H1 (cell line): ENCODE measurements at regions of chr6 and their contacts with region 1.

Region 1: DNA sequence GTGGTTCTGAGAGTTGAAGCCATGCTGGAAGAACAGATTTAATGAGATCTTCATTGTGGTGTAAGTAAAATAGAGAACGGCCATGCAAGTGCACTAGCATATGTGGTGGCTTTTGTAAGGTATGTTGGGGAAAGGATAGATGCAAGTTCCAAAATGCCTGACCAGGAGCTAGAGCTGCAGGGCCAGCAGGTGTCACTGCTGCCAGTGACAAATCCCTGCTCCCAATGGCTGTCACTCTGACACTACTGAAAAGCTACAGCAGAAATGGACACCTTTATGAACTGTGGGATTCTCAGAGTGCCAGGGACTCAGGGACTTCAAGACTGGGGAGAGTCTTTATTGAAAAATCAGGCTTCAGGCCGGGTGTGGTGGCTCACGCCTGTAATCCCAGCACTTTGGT is 23.1 kb upstream of the VIP start:
- DNase-seq: no peak
- H3K4me3 ChIP-seq: no peak overlapping the region
- H3K27ac ChIP-seq: no peak overlapping the region
- H3K4me1 ChIP-seq: no peaks in the 10 kb centered on the region
- H3K27me3 ChIP-seq: no peaks in the 10 kb centered on the region
- CTCF ChIP-seq: peak; percentile 40 to 55 (median 55); a peak in 3 of 4 replicates
- EP300 ChIP-seq: no peak
- POLR2A ChIP-seq: no peak
- RAD21 ChIP-seq: peak; percentile 50 to 57

Region 2: GRCh38 chr6:152680879-152681517 is 46.5 kb before region 1 on chr6:
- CTCF ChIA-PET with region 1: no interaction called
- POLR2A ChIA-PET with region 1: no interaction called
- DNase-seq: no peak
- H3K4me3 ChIP-seq: no peak overlapping the region
- H3K27ac ChIP-seq: no peak overlapping the region
- H3K4me1 ChIP-seq: peaks cover 0 to 17% (median 4%) of the 10 kb centered on the region in 4 experiments; a peak in 2 of 7 replicates
- H3K27me3 ChIP-seq: no peaks in the 10 kb centered on the region
- CTCF ChIP-seq: no peak
- EP300 ChIP-seq: no peak
- POLR2A ChIP-seq: no peak
- RAD21 ChIP-seq: no peak

Region 3: DNA sequence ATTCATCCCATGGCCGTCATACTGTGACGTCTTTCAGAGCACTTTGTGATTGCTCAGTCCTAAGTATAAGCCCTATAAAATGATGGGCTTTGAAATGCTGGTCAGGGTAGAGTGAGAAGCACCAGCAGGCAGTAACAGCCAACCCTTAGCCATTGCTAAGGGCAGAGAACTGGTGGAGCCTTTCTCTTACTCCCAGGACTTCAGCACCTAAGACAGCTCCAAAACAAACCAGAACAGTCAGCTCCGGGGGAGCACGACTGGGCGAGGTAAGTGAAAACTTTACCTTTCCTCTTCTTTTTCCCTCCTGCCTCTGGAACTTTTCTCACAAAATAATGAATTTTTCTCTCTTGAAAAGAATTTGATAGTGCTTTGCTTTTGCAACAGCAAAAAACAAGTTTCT is 23.2 kb after region 1 on chr6 and contains the start of gene VIP:
- CTCF ChIA-PET with region 1: interaction called, 15 read pairs
- POLR2A ChIA-PET with region 1: no interaction called
- DNase-seq: peak; percentile 36 to 54
- H3K4me3 ChIP-seq: no peak within 1 kb of the TSS
- H3K27ac ChIP-seq: no peak within 1 kb of the TSS
- H3K4me1 ChIP-seq: no peaks in the 10 kb centered on the region; a peak in 1 of 7 replicates
- H3K27me3 ChIP-seq: no peaks in the 10 kb centered on the region
- CTCF ChIP-seq: no peak
- EP300 ChIP-seq: no peak
- POLR2A ChIP-seq: no peak
- RAD21 ChIP-seq: peak in 1 of 2 experiments; percentile 30; a peak in 1 of 4 replicates
- total RNA-seq, gene VIP: not detected in 2 replicates